ENCODE measurements at regions of chr6 and their contacts with region 1.

Region 1: GRCh38 chr6:159833556-159833955 is 33.5 kb downstream of the PNLDC1 start:
- DNase-seq: no peak
- ATAC-seq: peak; percentile 35 to 36
- H3K4me3 Mint-ChIP-seq: peak overlapping the region in 6 of 10 donors; percentile 26 to 47 (median 32)
- H3K27ac Mint-ChIP-seq: peak overlapping the region in 9 of 10 donors; percentile 13 to 87 (median 63)
- H3K4me1 Mint-ChIP-seq: peaks cover 17 to 59% (median 49%) of the 10 kb centered on the region in 4 donors
- H3K27me3 Mint-ChIP-seq: no peaks in the 10 kb centered on the region

Region 2: DNA sequence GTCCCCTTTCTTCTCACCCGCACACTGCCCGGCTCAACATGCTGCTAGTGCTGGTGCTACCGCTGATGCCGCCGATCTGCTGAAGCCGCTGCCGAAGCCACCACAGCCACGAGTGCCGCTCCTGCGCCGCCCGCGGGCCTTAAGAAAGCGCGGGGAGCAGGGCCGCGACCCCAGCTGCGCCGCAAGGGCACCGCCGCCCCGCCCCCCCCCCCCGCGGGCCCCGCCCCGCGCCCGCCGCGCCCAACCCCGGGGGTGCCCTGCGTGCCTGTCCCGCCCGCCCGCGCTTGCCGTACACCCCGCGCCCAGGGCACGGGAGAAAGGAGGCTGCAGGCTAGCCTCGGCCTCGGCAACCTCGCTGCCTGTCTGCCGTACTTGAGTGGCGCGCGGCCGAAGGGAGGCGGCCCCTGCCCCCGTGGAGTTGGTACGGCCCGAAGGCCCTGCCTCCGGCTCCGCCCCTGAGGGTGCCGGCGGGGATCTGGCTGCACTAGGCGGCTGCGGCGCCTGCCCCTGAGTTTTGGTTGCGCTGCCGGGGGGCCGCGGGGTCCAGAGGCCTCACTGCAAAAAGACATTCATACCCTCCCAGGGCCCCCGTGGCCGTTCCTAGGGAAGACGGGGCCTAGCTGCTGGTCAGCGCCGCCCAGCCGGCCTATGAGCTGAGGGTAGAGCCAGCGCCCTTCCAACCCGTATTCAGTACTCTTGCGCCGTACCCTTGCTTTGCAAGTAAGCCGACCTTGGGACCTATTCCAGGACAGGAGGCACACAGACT is 140.2 kb before region 1 on chr6 and contains the start of gene SOD2:
- POLR2A ChIA-PET with region 1: no interaction called
- DNase-seq: peak; percentile 70 to 95 (median 84)
- ATAC-seq: peak; percentile 74 to 77
- H3K4me3 Mint-ChIP-seq: peak within 1 kb of the TSS; percentile 88 to 97 (median 94)
- H3K27ac Mint-ChIP-seq: peak within 1 kb of the TSS; percentile 35 to 98 (median 96)
- H3K4me1 Mint-ChIP-seq: peaks cover 29 to 45% (median 45%) of the 10 kb centered on the region in 4 donors
- H3K27me3 Mint-ChIP-seq: no peaks in the 10 kb centered on the region
- polyA plus RNA-seq, gene SOD2: 80.5 to 92.0 (median 90.0) TPM

Region 3: DNA sequence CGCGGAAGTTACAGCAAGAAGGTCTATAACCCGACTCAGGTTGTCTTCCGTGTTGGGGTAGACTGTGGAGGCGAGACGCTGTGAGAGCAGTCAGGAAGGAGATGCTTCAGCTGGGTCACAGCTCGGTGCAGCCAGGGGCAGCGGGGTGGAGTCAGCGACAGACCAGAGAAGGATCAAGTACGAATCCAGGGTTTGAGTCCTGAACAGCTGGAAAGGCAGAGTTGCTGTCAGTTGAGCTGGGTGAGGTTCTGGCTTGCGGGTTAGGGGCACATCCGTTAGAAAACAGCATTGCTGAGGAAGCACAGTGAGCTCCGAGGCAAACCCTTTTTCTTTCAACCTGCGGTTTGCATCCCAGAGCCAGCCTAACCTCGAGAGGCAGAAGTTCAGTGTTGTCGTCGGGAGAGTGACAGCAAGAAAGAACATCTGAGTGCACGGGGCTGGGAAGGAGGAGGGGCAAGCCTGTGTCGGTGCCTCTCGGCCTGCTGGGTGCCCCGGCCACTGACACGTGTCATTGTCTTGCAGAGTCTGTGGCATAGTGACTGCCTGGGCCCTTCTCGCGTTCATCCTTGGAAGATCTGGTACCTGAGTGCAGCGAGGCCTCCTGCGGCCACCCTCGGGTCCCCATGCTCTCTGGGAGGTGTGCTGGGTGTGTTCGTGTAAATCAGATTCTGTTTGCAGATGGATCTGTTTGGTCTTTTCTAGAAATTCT is 13.5 kb before region 1 on chr6:
- POLR2A ChIA-PET with region 1: interaction called, 25 read pairs
- DNase-seq: peak in 8 of 10 donors; percentile 4 to 70 (median 42)
- ATAC-seq: peak; percentile 84 to 88
- H3K4me3 Mint-ChIP-seq: peak overlapping the region; percentile 77 to 88 (median 86)
- H3K27ac Mint-ChIP-seq: peak overlapping the region; percentile 84 to 96 (median 93)
- H3K4me1 Mint-ChIP-seq: peaks cover 19 to 39% (median 25%) of the 10 kb centered on the region in 4 donors
- H3K27me3 Mint-ChIP-seq: no peaks in the 10 kb centered on the region

Measured in naive thymus-derived CD8-positive, alpha-beta T cell (primary cell).